ENCODE measurements at regions of chr1 and their contacts with region 1.

Region 1: GRCh38 chr1:47388891-47389238 is 27.2 kb upstream of the FOXE3 start:
- DNase-seq: peak in 12 of 14 experiments; percentile 7 to 51 (median 18)
- ATAC-seq: peak; percentile 32
- H3K4me3 ChIP-seq: no peak overlapping the region
- H3K4me3 Mint-ChIP-seq: no peak overlapping the region
- H3K27ac ChIP-seq: no peak overlapping the region
- H3K27ac Mint-ChIP-seq: no peak overlapping the region
- H3K4me1 ChIP-seq: no peaks in the 10 kb centered on the region
- H3K4me1 Mint-ChIP-seq: no peaks in the 10 kb centered on the region
- H3K27me3 ChIP-seq: peaks cover 0 to 3% of the 10 kb centered on the region in 2 experiments
- H3K27me3 Mint-ChIP-seq: peaks cover 15% of the 10 kb centered on the region
- CTCF ChIP-seq: peak; percentile 43

Region 2: GRCh38 chr1:47725992-47726855 is 337.4 kb after region 1 on chr1:
- CTCF ChIA-PET with region 1: interaction called, 9 read pairs
- POLR2A ChIA-PET with region 1: no interaction called
- intact Hi-C with region 1: loop called in 1 of 2 experiments (anchors 1 kb)
- DNase-seq: peak; percentile 37 to 72 (median 50)
- ATAC-seq: peak; percentile 83
- H3K4me3 ChIP-seq: no peak overlapping the region
- H3K4me3 Mint-ChIP-seq: peak overlapping the region; percentile 54
- H3K27ac ChIP-seq: no peak overlapping the region
- H3K27ac Mint-ChIP-seq: no peak overlapping the region
- H3K4me1 ChIP-seq: peaks cover 7% of the 10 kb centered on the region
- H3K4me1 Mint-ChIP-seq: peaks cover 10% of the 10 kb centered on the region
- H3K27me3 ChIP-seq: peaks cover 20 to 52% of the 10 kb centered on the region in 2 experiments
- H3K27me3 Mint-ChIP-seq: peaks cover 71% of the 10 kb centered on the region
- CTCF ChIP-seq: peak; percentile 70

Measured in CD4-positive, alpha-beta T cell (primary cell).